IMR-90 (cell line): ENCODE measurements at regions of chr9 and their contacts with region 1.

Region 1: DNA sequence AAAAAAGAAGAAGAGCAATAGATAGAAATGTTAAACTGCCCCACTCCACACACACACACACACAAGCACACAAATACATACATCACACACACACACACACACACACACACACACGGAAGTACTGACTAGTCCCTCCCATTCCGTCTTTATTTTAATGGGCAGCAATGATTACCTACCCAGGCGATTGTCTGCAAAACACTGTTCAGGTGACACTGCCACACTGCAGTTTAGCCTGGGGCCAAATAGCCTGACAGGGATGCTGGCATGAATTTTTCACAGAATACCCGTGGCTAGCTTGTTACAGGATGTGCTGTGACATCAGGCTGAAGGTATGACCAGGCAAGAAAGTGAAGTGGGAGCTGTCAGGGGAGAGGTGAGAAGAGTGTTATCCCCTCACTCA is 86.9 kb downstream of the FRMD3 start:
- DNase-seq: no peak
- ATAC-seq: no peak
- H3K4me3 ChIP-seq: no peak overlapping the region
- H3K27ac ChIP-seq: no peak overlapping the region
- H3K4me1 ChIP-seq: no peaks in the 10 kb centered on the region
- H3K27me3 ChIP-seq: no peaks in the 10 kb centered on the region
- CTCF ChIP-seq: no peak
- POLR2A ChIP-seq: no peak
- RAD21 ChIP-seq: no peak

Region 2: GRCh38 chr9:82570226-82570625 is 881.1 kb before region 1 on chr9:
- CTCF ChIA-PET with region 1: no interaction called
- POLR2A ChIA-PET with region 1: no interaction called
- dilution Hi-C with region 1: no loop called
- in situ Hi-C with region 1: no loop called
- intact Hi-C with region 1: no loop called
- DNase-seq: peak; percentile 4
- ATAC-seq: no peak; the same call in 1 of the 2 replicates
- H3K4me3 ChIP-seq: no peak overlapping the region
- H3K27ac ChIP-seq: no peak overlapping the region
- H3K4me1 ChIP-seq: no peaks in the 10 kb centered on the region
- H3K27me3 ChIP-seq: no peaks in the 10 kb centered on the region; the same call in 1 of the 2 replicates
- CTCF ChIP-seq: peak; percentile 23; the same call in 1 of the 2 replicates
- POLR2A ChIP-seq: no peak
- RAD21 ChIP-seq: peak; percentile 37

Region 3: GRCh38 chr9:83472221-83472665 is 20.9 kb after region 1 on chr9:
- CTCF ChIA-PET with region 1: no interaction called
- POLR2A ChIA-PET with region 1: interaction called, 11 read pairs
- dilution Hi-C with region 1: no loop called
- in situ Hi-C with region 1: no loop called
- intact Hi-C with region 1: no loop called
- DNase-seq: peak; percentile 1
- ATAC-seq: no peak
- H3K4me3 ChIP-seq: no peak overlapping the region
- H3K27ac ChIP-seq: no peak overlapping the region
- H3K4me1 ChIP-seq: no peaks in the 10 kb centered on the region
- H3K27me3 ChIP-seq: no peaks in the 10 kb centered on the region
- CTCF ChIP-seq: no peak
- POLR2A ChIP-seq: no peak
- RAD21 ChIP-seq: no peak